ENCODE measurements at regions of chr20 and their contacts with region 1.

Region 1: GRCh38 chr20:48620519-48621254 is 207.1 kb downstream of the PREX1 start:
- DNase-seq: no peak
- H3K4me3 ChIP-seq: peak overlapping the region; percentile 37 to 43 (median 40)
- H3K27ac ChIP-seq: peak overlapping the region; percentile 2 to 53 (median 30)
- H3K4me1 ChIP-seq: peaks cover 20 to 27% (median 22%) of the 10 kb centered on the region in 4 donors
- H3K27me3 ChIP-seq: no peaks in the 10 kb centered on the region
- CTCF ChIP-seq: peak; percentile 80 to 95 (median 82)
- EP300 ChIP-seq: no peak
- POLR2A ChIP-seq: no peak

Region 2: GRCh38 chr20:47677635-47678453 is 942.8 kb before region 1 on chr20:
- intact Hi-C with region 1: loop called (anchors 5 kb)
- DNase-seq: no peak
- H3K4me3 ChIP-seq: no peak overlapping the region
- H3K27ac ChIP-seq: no peak overlapping the region
- H3K4me1 ChIP-seq: peaks cover 17 to 34% (median 23%) of the 10 kb centered on the region in 4 donors
- H3K27me3 ChIP-seq: no peaks in the 10 kb centered on the region
- CTCF ChIP-seq: peak; percentile 71 to 85 (median 81)
- EP300 ChIP-seq: no peak
- POLR2A ChIP-seq: no peak

Region 3: DNA sequence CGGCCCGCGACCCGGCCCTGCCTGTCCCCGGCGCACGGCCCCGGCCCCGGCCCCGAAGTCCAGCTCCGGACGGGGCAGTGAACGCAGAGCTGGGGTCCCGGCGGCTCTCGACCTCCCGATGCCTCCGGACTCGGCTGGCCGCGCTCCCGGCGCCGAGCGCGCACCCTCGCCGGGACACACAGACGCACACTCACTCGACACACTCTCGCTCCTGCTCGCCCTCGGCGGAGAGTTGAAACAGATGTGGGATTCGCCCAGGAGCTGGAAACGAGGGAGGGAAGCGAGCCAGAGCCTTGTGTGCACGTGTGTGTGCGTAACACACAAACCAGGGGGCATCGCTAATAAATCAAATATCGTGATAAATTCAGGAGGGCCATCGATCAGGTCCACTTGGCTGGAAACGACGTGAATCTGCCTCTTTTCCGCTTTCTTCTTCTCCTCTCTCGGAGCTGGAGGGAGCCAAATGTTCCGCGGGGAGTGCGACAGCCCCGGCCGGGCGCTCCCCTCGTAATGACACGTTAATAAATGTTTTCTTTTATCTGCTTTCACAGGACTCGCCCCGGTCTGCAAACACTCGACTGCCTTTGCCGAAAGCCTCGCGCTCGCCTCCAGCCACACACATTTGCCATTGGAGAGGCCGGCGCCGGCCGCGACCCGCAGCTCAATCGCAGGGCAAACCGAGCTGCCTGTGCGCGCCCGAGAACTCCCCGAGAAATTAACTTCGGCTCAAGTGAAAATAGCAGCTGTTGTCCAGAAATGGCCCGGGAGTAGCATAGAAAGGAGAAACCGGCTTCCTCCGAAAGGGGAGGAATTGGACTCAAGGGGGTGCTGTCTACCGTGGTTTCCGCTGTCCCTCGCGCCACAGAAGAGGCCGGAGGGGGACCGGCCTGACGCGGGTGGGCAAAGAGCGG is 834.6 kb before region 1 on chr20:
- intact Hi-C with region 1: loop called (anchors 2 kb)
- DNase-seq: peak; percentile 93
- H3K4me3 ChIP-seq: peak overlapping the region; percentile 75 to 84 (median 78)
- H3K27ac ChIP-seq: peak overlapping the region; percentile 90 to 95 (median 94)
- H3K4me1 ChIP-seq: peaks cover 19 to 81% (median 66%) of the 10 kb centered on the region in 4 donors
- H3K27me3 ChIP-seq: no peaks in the 10 kb centered on the region
- CTCF ChIP-seq: peak; percentile 77 to 85 (median 77)
- EP300 ChIP-seq: no peak
- POLR2A ChIP-seq: no peak

Region 4: DNA sequence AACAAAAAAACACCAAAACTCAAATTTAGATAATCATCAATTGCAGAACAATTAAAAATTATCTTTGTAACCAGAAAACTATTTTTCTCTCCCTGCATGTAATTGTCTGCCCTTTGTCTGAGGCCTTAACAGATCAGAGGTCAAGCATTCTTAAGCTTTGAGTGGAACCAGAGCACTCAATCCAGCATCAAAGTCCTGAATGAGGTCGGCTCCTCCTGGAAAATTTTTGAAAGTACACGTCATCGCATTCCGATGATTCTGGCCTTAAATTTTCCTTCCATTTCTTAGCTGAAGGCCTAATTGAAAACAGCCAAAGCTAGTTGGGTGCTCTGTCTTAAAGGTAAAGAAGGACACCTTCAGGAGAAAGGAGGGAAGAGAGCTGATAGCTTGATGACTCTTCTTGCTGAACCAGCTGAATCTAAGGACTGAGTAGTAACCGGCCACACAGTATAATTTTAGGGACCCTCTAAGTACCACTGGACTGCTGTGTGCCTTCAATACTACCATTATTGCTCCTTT is 325.2 kb before region 1 on chr20:
- intact Hi-C with region 1: loop called (anchors 5 kb)
- DNase-seq: no peak
- H3K4me3 ChIP-seq: no peak overlapping the region
- H3K27ac ChIP-seq: peak overlapping the region; percentile 68 to 77 (median 76)
- H3K4me1 ChIP-seq: peaks cover 28 to 47% (median 39%) of the 10 kb centered on the region in 4 donors
- H3K27me3 ChIP-seq: no peaks in the 10 kb centered on the region
- CTCF ChIP-seq: peak; percentile 35 to 62 (median 48)
- EP300 ChIP-seq: no peak
- POLR2A ChIP-seq: no peak

Region 5: DNA sequence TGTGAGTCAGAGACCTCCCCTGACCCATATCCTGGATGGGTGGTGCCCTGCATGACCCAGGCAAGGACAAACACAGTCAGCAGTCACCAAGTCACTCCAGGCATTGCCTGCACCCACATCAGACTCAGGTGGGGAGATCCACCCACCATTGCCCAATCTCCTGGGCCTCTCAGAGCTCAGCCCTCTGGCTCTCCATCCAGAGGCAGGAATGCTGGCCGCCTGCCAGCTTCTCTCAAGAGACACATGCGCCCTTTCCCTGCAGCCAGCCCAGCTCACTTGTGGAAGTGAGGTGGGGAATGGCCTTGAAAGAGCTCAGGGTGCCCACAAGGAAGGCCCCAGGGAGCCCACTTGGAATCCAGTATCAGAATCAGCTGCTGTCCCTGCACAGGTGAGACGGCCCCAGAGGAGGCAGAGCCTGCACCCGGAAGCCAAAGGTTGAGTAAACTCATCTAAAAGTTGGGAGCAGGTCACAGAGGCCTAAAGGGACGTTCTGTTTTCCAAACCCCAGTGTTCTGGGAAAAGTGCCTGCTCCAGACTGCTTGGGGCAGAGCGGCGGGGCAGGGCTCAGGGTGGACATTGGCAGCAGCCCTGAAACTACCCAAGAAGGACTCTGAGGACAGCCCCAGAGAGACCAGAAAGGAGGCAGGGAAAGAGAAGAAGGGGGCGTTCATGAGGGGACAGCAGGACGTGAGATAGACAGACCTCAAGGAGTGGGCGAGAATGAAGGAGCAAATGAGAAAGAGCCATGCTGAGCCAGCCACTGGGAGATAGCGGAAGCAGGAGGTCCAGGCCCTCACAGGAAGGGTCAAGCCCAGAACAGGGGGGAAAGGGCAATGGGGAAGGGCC is 77.4 kb after region 1 on chr20:
- intact Hi-C with region 1: no loop called
- DNase-seq: no peak
- H3K4me3 ChIP-seq: no peak overlapping the region
- H3K27ac ChIP-seq: peak overlapping the region in 2 of 4 donors; percentile 29 to 58
- H3K4me1 ChIP-seq: peaks cover 14 to 19% (median 17%) of the 10 kb centered on the region in 4 donors
- H3K27me3 ChIP-seq: no peaks in the 10 kb centered on the region
- CTCF ChIP-seq: no peak
- EP300 ChIP-seq: no peak
- POLR2A ChIP-seq: no peak

Measured in esophagus muscularis mucosa (tissue), 4 donors.